ENCODE measurements at regions of chr15 and their contacts with region 1.

Region 1: DNA sequence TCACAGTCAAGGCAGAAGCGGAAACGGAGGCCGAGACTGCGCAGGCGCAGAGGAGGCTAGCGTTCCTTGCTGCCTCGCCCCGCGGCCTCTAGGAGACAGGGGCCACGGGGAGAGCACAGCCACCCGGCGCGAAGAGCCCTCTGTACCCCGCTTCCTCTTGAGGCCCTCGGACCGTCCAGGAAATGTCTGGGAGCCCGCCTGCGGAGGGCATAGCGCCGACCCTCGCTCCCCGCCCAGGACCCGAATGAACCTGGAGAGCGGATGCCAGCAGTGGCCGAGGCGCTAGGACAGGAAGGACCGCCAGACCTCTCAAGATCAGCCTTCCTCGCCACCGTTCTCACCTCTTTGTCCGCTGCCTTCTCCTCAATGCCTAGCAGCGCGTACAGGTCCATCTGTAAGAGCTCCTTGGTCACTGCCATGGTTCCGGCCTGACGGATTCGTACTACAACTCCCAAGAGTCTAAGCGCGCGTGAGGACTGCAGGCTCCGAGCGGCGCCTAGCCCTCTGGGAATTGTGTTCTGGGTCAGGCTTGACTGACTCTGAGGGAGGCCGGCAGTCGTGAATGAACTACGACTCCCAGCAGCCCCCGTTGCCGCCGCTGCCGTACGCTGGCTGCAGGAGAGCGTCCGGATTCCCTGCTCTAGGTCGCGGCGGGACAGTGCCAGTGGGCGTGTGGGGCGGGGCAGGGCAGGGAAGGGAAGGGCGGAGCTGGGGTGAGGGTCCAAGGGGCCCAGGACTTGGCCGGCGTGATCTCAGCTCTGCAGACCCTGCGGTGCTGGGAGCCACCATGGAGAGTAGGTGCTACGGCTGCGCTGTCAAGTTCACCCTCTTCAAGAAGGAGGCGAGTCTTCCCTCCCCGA is at the starts of genes DNAJC17 and ZFYVE19:
- DNase-seq: peak; percentile 97
- H3K4me3 Mint-ChIP-seq: peak within 1 kb of the TSS; percentile 97
- H3K27ac Mint-ChIP-seq: peak within 1 kb of the TSS; percentile 98
- H3K4me1 Mint-ChIP-seq: peaks cover 21% of the 10 kb centered on the region
- H3K27me3 Mint-ChIP-seq: no peaks in the 10 kb centered on the region
- total RNA-seq, gene DNAJC17: 32.5 to 34.5 TPM
- total RNA-seq, gene ZFYVE19: 22.8 to 26.1 TPM

Region 2: GRCh38 chr15:40493089-40493840 is 314.0 kb before region 1 on chr15:
- CTCF ChIA-PET with region 1: no interaction called
- POLR2A ChIA-PET with region 1: no interaction called
- intact Hi-C with region 1: loop called (anchors 1 kb)
- DNase-seq: peak; percentile 85
- H3K4me3 Mint-ChIP-seq: peak overlapping the region; percentile 4
- H3K27ac Mint-ChIP-seq: peak overlapping the region; percentile 74
- H3K4me1 Mint-ChIP-seq: peaks cover 27% of the 10 kb centered on the region
- H3K27me3 Mint-ChIP-seq: peaks cover 1% of the 10 kb centered on the region

Region 3: GRCh38 chr15:40694688-40695468 is 112.4 kb before region 1 on chr15 and contains the start of gene RAD51:
- CTCF ChIA-PET with region 1: no interaction called
- POLR2A ChIA-PET with region 1: interaction called, 5 read pairs
- intact Hi-C with region 1: loop called (anchors 1 kb)
- DNase-seq: peak; percentile 96
- H3K4me3 Mint-ChIP-seq: peak within 1 kb of the TSS; percentile 91
- H3K27ac Mint-ChIP-seq: peak within 1 kb of the TSS; percentile 98
- H3K4me1 Mint-ChIP-seq: peaks cover 27% of the 10 kb centered on the region
- H3K27me3 Mint-ChIP-seq: no peaks in the 10 kb centered on the region
- total RNA-seq, gene RAD51: 67.1 to 70.0 TPM

Region 4: GRCh38 chr15:40706121-40706520 is 101.1 kb before region 1 on chr15:
- CTCF ChIA-PET with region 1: no interaction called
- POLR2A ChIA-PET with region 1: no interaction called
- intact Hi-C with region 1: no loop called
- DNase-seq: no peak
- H3K4me3 Mint-ChIP-seq: no peak overlapping the region
- H3K27ac Mint-ChIP-seq: no peak overlapping the region
- H3K4me1 Mint-ChIP-seq: no peaks in the 10 kb centered on the region
- H3K27me3 Mint-ChIP-seq: no peaks in the 10 kb centered on the region

Region 5: GRCh38 chr15:40763801-40764732 is 43.2 kb before region 1 on chr15 and contains the start of gene GCHFR:
- CTCF ChIA-PET with region 1: no interaction called
- POLR2A ChIA-PET with region 1: no interaction called
- intact Hi-C with region 1: loop called (anchors 1 kb)
- DNase-seq: peak; percentile 82
- H3K4me3 Mint-ChIP-seq: peak within 1 kb of the TSS; percentile 63
- H3K27ac Mint-ChIP-seq: peak within 1 kb of the TSS; percentile 79
- H3K4me1 Mint-ChIP-seq: peaks cover 31% of the 10 kb centered on the region
- H3K27me3 Mint-ChIP-seq: no peaks in the 10 kb centered on the region
- total RNA-seq, gene GCHFR: 36.0 to 40.2 TPM

Region 6: DNA sequence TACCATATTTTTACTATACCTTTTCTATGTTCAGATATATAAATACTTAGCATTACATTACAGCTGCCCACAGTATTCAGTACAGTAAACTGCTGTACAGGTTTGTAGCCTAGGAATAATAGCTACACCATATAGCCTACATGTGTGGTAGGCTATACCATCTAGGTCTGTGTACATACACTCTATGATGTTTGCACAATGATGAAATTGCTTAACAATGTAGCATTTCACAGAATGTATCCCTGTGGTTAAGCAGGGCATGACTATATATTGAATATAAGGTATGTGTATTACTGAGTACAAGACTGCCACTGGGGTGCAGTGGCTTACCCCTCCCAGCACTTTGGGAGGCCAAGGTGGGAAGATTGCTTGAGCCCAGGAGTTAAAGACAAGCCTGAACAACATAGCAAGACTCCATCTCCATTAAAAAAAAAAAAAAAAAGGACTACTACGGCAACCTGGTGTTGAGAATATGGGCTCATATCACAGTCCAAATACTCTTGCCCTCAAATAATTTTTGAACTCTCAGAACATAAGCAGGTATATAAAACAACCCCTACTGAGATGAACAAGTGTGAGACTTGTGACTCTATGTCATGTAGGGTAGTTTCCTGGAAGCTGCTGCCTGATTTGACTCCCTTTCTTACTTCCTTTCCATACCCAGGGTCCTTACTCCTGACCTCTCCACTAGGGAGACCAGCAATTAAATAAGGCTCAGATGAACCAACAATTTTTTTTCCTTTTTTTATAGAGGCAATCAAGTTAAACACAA is 16.5 kb after region 1 on chr15:
- CTCF ChIA-PET with region 1: no interaction called
- POLR2A ChIA-PET with region 1: no interaction called
- intact Hi-C with region 1: no loop called
- DNase-seq: no peak
- H3K4me3 Mint-ChIP-seq: no peak overlapping the region
- H3K27ac Mint-ChIP-seq: no peak overlapping the region
- H3K4me1 Mint-ChIP-seq: no peaks in the 10 kb centered on the region
- H3K27me3 Mint-ChIP-seq: peaks cover 4% of the 10 kb centered on the region

Region 7: GRCh38 chr15:40847205-40847961 is 40.1 kb after region 1 on chr15:
- CTCF ChIA-PET with region 1: interaction called, 3 read pairs
- POLR2A ChIA-PET with region 1: interaction called, 4 read pairs
- intact Hi-C with region 1: loop called (anchors 2 kb)
- DNase-seq: no peak
- H3K4me3 Mint-ChIP-seq: no peak overlapping the region
- H3K27ac Mint-ChIP-seq: no peak overlapping the region
- H3K4me1 Mint-ChIP-seq: peaks cover 27% of the 10 kb centered on the region
- H3K27me3 Mint-ChIP-seq: peaks cover 6% of the 10 kb centered on the region

Region 8: GRCh38 chr15:40886586-40886985 is 79.3 kb after region 1 on chr15:
- CTCF ChIA-PET with region 1: no interaction called
- POLR2A ChIA-PET with region 1: no interaction called
- intact Hi-C with region 1: no loop called
- DNase-seq: no peak
- H3K4me3 Mint-ChIP-seq: no peak overlapping the region
- H3K27ac Mint-ChIP-seq: no peak overlapping the region
- H3K4me1 Mint-ChIP-seq: peaks cover 16% of the 10 kb centered on the region
- H3K27me3 Mint-ChIP-seq: no peaks in the 10 kb centered on the region

Region 9: GRCh38 chr15:41116116-41116871 is 309.0 kb after region 1 on chr15 and contains the start of gene INO80:
- CTCF ChIA-PET with region 1: no interaction called
- POLR2A ChIA-PET with region 1: no interaction called
- intact Hi-C with region 1: loop called (anchors 5 kb)
- DNase-seq: peak; percentile 98
- H3K4me3 Mint-ChIP-seq: peak within 1 kb of the TSS; percentile 91
- H3K27ac Mint-ChIP-seq: peak within 1 kb of the TSS; percentile 98
- H3K4me1 Mint-ChIP-seq: peaks cover 12% of the 10 kb centered on the region
- H3K27me3 Mint-ChIP-seq: no peaks in the 10 kb centered on the region
- total RNA-seq, gene INO80: 19.9 to 22.8 TPM

Measured in activated CD4-positive, alpha-beta memory T cell treated with anti-CD3 and anti-CD28 coated beads for 36 hours (primary cell).